Endothelial cell of umbilical vein (primary cell): ENCODE measurements at regions of chr15 and their contacts with region 1.

Region 1: GRCh38 chr15:65054333-65055200 is 9.4 kb downstream of the SLC51B start:
- DNase-seq: peak; percentile 61
- H3K4me3 ChIP-seq: no peak overlapping the region
- H3K27ac ChIP-seq: no peak overlapping the region
- H3K4me1 ChIP-seq: peaks cover 9% of the 10 kb centered on the region
- H3K27me3 ChIP-seq: no peaks in the 10 kb centered on the region
- CTCF ChIP-seq: peak; percentile 91 to 96
- POLR2A ChIP-seq: no peak

Region 2: DNA sequence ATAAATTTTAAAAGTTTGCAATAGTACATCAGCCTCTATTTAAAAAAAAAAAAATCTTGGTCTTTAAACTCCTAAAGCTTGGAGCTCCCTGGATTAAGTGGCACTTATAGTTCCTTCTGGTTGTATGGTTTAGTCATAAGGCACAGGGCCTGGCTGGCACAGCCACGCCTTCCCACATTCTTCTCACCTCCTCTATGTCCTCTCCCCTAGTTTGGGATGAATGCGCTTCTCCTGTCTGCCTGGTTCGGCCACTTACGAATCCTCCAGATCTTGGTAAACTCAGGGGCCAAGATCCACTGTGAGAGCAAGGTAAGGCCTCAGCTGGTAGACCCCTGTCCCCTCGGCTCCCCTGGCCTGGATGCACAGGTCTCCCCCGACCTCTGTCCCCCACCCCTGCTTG is 132.9 kb before region 1 on chr15:
- CTCF ChIA-PET with region 1: no interaction called
- POLR2A ChIA-PET with region 1: no interaction called
- dilution Hi-C with region 1: no loop called
- intact Hi-C with region 1: no loop called
- DNase-seq: no peak
- H3K4me3 ChIP-seq: no peak overlapping the region
- H3K27ac ChIP-seq: no peak overlapping the region
- H3K4me1 ChIP-seq: no peaks in the 10 kb centered on the region
- H3K27me3 ChIP-seq: no peaks in the 10 kb centered on the region
- CTCF ChIP-seq: no peak
- POLR2A ChIP-seq: no peak

Region 3: DNA sequence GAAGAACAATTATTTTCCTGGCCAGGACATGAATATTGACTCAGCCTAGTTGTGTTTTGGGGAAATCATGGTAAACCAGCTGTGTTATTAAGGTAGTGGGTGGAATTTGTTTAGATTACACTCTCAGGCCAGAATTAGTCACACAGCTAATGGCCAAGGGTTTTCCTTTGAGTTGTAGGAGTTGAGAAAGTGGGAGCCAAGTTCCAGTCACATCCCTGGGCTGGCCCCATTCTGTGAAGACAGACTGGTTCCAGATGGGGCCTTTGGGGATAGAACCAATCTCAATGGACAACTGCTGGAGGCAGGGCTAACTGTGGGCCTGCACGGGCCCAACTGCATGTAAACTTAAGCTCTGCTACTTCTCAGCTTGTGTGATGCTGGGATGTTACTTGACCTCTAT is 14.6 kb after region 1 on chr15:
- CTCF ChIA-PET with region 1: interaction called, 12 read pairs
- POLR2A ChIA-PET with region 1: no interaction called
- dilution Hi-C with region 1: no loop called
- intact Hi-C with region 1: no loop called
- DNase-seq: no peak
- H3K4me3 ChIP-seq: no peak overlapping the region
- H3K27ac ChIP-seq: no peak overlapping the region
- H3K4me1 ChIP-seq: no peaks in the 10 kb centered on the region
- H3K27me3 ChIP-seq: peaks cover 31 to 41% of the 10 kb centered on the region in 2 experiments
- CTCF ChIP-seq: no peak
- POLR2A ChIP-seq: no peak

Region 4: DNA sequence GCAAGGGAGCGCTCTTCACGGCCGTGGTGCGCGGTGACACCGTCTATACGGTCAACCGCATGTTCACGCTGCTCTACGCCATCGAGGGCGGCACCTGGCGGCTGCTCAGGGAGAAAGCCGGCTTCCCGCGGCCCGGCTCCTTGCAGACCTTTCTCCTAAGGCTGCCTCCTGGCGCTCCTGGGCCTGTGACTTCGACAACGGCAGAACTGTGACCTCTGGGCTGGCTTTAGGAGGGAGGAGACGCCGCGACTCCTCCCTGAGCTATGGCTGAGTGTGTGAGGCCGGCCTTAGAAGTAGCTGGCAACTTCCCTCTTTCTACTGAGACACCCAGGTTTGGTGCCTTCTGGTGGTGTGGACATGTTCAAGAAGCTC is 23.4 kb after region 1 on chr15:
- CTCF ChIA-PET with region 1: interaction called, 89 read pairs
- POLR2A ChIA-PET with region 1: no interaction called
- dilution Hi-C with region 1: no loop called
- intact Hi-C with region 1: loop called (anchors 1 kb)
- DNase-seq: peak; percentile 58
- H3K4me3 ChIP-seq: no peak overlapping the region
- H3K27ac ChIP-seq: no peak overlapping the region
- H3K4me1 ChIP-seq: no peaks in the 10 kb centered on the region
- H3K27me3 ChIP-seq: peaks cover 34 to 35% of the 10 kb centered on the region in 2 experiments
- CTCF ChIP-seq: peak; percentile 60 to 85
- POLR2A ChIP-seq: no peak

Region 5: DNA sequence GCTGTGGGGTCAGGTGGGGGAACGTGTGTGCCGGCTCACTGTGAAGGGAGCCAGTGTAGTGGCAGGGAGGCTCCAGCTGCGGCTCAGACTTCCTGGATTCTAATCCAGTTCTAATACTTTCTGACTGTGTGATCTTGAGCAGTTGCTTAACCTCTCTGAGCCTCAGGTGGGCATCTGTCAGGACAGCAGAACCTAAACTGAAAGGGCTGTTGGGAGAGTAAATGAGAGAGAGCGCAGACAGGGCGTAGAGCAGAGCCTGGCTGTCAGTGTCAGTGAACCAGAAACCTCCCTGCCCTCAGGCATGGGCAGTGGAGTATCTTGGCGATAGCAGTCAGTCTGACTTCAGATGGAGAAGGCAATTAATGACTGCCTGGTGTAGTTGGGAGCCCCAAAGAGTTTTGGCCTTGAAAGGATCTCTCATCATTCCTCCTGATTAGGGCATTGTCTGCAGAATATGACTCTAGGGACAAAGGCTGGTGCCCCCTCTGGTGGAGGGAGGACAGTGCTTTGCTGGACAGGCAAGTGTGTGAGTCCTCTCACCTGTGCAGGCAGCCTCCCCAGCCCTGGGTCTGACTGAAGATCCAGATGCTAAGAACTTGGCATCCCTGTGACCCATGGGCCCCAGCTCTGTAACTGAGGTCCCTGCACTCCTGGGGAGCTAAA is 31.6 kb after region 1 on chr15:
- CTCF ChIA-PET with region 1: interaction called, 36 read pairs
- POLR2A ChIA-PET with region 1: no interaction called
- dilution Hi-C with region 1: no loop called
- intact Hi-C with region 1: loop called (anchors 1 kb)
- DNase-seq: peak; percentile 18
- H3K4me3 ChIP-seq: no peak overlapping the region
- H3K27ac ChIP-seq: no peak overlapping the region
- H3K4me1 ChIP-seq: no peaks in the 10 kb centered on the region
- H3K27me3 ChIP-seq: peaks cover 28 to 29% of the 10 kb centered on the region in 2 experiments
- CTCF ChIP-seq: peak; percentile 20 to 57
- POLR2A ChIP-seq: no peak